Posterior vena cava (tissue), 2 donors: ENCODE measurements at regions of chr6 and their contacts with region 1.

Region 1: GRCh38 chr6:138235693-138236092 is 17.4 kb upstream of the PBOV1 start:
- DNase-seq: no peak

Region 2: DNA sequence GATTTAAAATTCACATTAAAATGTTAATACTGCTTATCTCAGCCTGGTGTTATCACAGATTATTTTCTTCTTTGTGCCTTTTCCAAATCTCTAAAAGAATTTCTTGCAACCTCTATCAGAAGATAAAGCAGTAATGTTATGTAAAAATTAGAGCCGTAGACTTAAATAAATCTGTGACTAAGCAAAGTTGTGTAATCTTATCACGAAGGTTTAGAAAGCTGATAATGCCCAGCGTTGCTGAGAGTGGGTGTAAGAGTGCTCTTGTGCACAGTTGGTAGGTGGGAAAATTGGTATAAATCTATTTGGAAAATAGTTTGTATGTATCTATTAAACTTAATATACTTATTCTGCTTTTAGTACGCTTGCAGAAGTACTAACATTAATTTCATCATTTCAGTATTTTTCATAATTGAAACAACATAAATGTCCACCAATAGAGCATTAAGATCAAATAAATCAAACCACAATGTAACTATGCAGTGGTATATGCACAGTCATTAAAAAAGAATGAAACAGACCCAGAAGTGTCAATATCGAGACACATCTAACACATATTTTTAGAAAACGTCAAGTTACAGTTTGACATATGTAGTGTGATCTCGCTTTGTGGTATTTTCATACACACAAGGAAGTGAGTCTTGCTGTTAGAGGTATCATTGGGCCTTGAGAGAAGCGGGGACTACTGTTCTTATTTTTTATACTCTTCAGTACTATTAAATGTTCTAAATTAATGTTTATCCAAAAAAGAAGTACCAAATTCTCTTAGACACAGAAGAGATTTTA is 37.0 kb after region 1 on chr6:
- intact Hi-C with region 1: loop called in 1 of 2 experiments (anchors 1 kb)
- DNase-seq: no peak